ENCODE measurements at regions of chr6 and their contacts with region 1.

Region 1: GRCh38 chr6:31827286-31828079 is at the start of gene HSPA1B:
- DNase-seq: peak; percentile 100
- H3K4me3 ChIP-seq: peak within 1 kb of the TSS in 2 of 3 experiments; percentile 41 to 45
- H3K27ac ChIP-seq: peak within 1 kb of the TSS; percentile 56
- H3K4me1 ChIP-seq: peaks cover 17% of the 10 kb centered on the region
- H3K27me3 ChIP-seq: no peaks in the 10 kb centered on the region
- CTCF ChIP-seq: no peak
- POLR2A ChIP-seq: peak; percentile 99
- total RNA-seq, gene HSPA1B: 49.3 and 54.0 TPM in 2 replicates

Region 2: DNA sequence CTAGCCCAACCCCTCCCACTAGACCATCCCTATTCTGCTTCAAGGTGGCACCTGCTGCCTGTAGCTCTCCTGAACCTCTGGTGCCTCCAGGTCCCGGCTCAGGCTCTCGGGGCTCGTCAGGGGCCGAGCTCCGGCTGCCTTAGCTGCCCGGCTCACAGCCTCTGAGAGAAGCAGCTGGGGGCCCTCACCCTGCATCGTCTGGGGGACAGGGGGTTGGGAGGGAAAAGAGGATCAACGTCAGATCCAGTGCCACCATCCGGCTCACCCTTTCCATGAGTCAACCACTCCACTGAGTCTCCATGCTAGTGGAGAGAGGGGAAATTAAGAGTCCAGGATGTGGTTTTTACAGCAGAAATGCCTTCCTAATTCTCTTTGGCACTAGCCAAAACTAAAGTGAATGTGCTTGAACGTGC is 188.0 kb before region 1 on chr6:
- CTCF ChIA-PET with region 1: interaction called, 10 read pairs
- POLR2A ChIA-PET with region 1: interaction called, 4 read pairs
- dilution Hi-C with region 1: no loop called
- intact Hi-C with region 1: no loop called
- DNase-seq: no peak
- H3K4me3 ChIP-seq: no peak overlapping the region
- H3K27ac ChIP-seq: no peak overlapping the region
- H3K4me1 ChIP-seq: no peaks in the 10 kb centered on the region
- H3K27me3 ChIP-seq: no peaks in the 10 kb centered on the region
- CTCF ChIP-seq: no peak
- POLR2A ChIP-seq: no peak

Region 3: DNA sequence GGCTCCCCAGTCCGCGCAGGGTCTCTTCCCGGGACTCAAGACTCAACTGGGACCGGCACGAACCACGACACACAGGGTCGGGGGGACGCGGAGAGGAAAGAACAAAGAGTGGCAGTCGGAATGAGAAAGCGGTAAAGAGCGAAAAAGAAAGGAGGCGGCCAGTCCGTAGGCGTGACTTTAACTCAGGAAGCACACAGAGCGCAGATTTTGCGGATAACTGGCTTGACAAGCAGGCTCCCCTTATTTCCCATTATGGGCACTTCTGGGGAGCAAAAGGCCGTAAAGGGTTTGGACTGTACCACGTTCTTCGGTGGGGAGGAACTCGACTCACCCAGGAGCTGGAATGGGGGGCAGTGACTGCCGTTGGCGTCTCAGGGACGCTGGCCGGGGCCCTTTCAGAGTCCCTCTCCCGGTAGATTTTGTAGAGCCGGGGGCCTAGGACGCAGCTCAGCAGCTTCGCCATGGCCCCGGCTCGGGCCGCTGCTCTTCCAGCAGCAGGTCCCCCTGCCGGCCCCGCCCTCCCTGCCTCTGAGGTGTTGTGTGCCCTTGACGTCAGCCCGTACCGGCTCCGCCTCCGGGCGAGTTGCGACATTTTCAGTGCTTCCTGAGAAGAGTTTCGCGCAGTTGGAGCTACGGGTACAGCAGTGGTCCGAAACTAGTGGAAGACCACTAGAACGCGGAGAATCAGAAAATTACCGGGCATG is 124.5 kb before region 1 on chr6 and contains the start of gene ABHD16A:
- CTCF ChIA-PET with region 1: interaction called, 8 read pairs
- POLR2A ChIA-PET with region 1: interaction called, 6 read pairs
- dilution Hi-C with region 1: no loop called
- intact Hi-C with region 1: loop called (anchors 1 kb)
- DNase-seq: peak; percentile 99
- H3K4me3 ChIP-seq: peak within 1 kb of the TSS; percentile 59 to 80 (median 74)
- H3K27ac ChIP-seq: peak within 1 kb of the TSS; percentile 77
- H3K4me1 ChIP-seq: peaks cover 11% of the 10 kb centered on the region
- H3K27me3 ChIP-seq: no peaks in the 10 kb centered on the region
- CTCF ChIP-seq: peak in 1 of 2 donors; percentile 3
- POLR2A ChIP-seq: peak; percentile 97
- total RNA-seq, gene ABHD16A: 41.3 and 48.9 TPM in 2 replicates

Region 4: DNA sequence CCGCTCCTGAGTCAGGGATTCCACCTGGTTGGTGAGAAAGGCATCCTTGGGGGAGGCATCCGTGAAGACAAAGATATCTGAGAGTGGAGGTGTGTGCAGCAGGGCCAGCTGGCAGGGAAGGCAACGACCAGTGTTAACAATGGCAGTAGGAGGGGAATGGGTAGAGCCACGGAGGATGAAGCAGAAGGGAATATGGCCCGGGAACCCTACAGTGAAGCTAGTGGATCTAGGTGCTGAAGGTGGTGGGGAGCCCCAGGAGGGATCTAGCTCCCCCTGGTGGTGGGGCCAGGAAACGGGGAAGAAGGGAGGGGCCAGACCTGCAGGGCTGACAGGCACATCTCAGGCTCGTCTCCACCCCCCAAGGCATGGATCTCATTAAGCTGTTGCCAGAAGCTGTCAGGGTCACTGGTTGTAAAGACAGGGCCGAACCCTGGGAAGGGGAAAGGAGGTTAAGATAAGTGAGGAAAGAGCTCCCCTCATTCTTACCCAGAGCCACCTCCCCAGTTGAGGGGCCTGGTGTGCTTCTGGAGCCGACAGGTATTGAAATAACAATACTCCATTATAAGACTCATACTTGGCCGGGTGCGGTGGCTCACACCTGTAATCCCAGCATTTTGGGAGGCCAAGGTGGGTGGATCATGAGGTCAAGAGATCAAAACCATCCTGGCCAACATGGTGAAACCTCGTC is 57.7 kb before region 1 on chr6:
- CTCF ChIA-PET with region 1: interaction called, 71 read pairs
- POLR2A ChIA-PET with region 1: interaction called, 7 read pairs
- dilution Hi-C with region 1: no loop called
- intact Hi-C with region 1: loop called (anchors 1 kb)
- DNase-seq: peak; percentile 66
- H3K4me3 ChIP-seq: no peak overlapping the region
- H3K27ac ChIP-seq: no peak overlapping the region
- H3K4me1 ChIP-seq: no peaks in the 10 kb centered on the region
- H3K27me3 ChIP-seq: no peaks in the 10 kb centered on the region
- CTCF ChIP-seq: peak; percentile 83 to 88
- POLR2A ChIP-seq: no peak

Region 5: GRCh38 chr6:31806465-31807272 is 20.8 kb before region 1 on chr6 and contains the start of gene LSM2:
- CTCF ChIA-PET with region 1: interaction called, 15 read pairs
- POLR2A ChIA-PET with region 1: interaction called, 32 read pairs
- dilution Hi-C with region 1: no loop called
- intact Hi-C with region 1: no loop called
- DNase-seq: peak; percentile 98
- H3K4me3 ChIP-seq: peak within 1 kb of the TSS; percentile 77 to 88 (median 87)
- H3K27ac ChIP-seq: peak within 1 kb of the TSS; percentile 42
- H3K4me1 ChIP-seq: peaks cover 11% of the 10 kb centered on the region
- H3K27me3 ChIP-seq: no peaks in the 10 kb centered on the region
- CTCF ChIP-seq: peak in 1 of 2 donors; percentile 25
- POLR2A ChIP-seq: peak; percentile 94
- total RNA-seq, gene LSM2: 78.1 and 78.6 TPM in 2 replicates